Mammary epithelial cell (primary cell): ENCODE measurements at regions of chr7 and their contacts with region 1.

Region 1: GRCh38 chr7:142880876-142881505 is 4.6 kb downstream of the TRPV6 start:
- DNase-seq: no peak
- H3K4me3 ChIP-seq: no peak overlapping the region
- H3K27ac ChIP-seq: no peak overlapping the region
- H3K4me1 ChIP-seq: peaks cover 16% of the 10 kb centered on the region
- H3K27me3 ChIP-seq: no peaks in the 10 kb centered on the region
- CTCF ChIP-seq: peak; percentile 92 to 97

Region 2: GRCh38 chr7:142960955-142961512 is 80.0 kb after region 1 on chr7:
- CTCF ChIA-PET with region 1: no interaction called
- dilution Hi-C with region 1: no loop called
- in situ Hi-C with region 1: no loop called
- intact Hi-C with region 1: loop called (anchors 1 kb)
- DNase-seq: no peak
- H3K4me3 ChIP-seq: no peak overlapping the region
- H3K27ac ChIP-seq: no peak overlapping the region
- H3K4me1 ChIP-seq: peaks cover 17% of the 10 kb centered on the region
- H3K27me3 ChIP-seq: no peaks in the 10 kb centered on the region
- CTCF ChIP-seq: peak; percentile 52 to 82

Region 3: GRCh38 chr7:143214789-143215679 is 334.0 kb after region 1 on chr7:
- CTCF ChIA-PET with region 1: interaction called, 3 read pairs
- dilution Hi-C with region 1: no loop called
- in situ Hi-C with region 1: loop called in 1 of 2 experiments (anchors 25 kb)
- intact Hi-C with region 1: loop called (anchors 5 kb)
- DNase-seq: peak; percentile 67
- H3K4me3 ChIP-seq: no peak overlapping the region
- H3K27ac ChIP-seq: no peak overlapping the region
- H3K4me1 ChIP-seq: no peaks in the 10 kb centered on the region
- H3K27me3 ChIP-seq: no peaks in the 10 kb centered on the region
- CTCF ChIP-seq: peak; percentile 99 to 100